Calu3 (cell line): ENCODE measurements at regions of chr19 and their contacts with region 1.

Region 1: GRCh38 chr19:8204961-8205360 is 4.2 kb upstream of the CERS4 start:
- DNase-seq: peak; percentile 38
- H3K4me3 Mint-ChIP-seq: no peak overlapping the region
- H3K27ac Mint-ChIP-seq: no peak overlapping the region
- H3K4me1 Mint-ChIP-seq: peaks cover 13% of the 10 kb centered on the region
- H3K27me3 Mint-ChIP-seq: peaks cover 26% of the 10 kb centered on the region
- CTCF ChIP-seq: no peak

Region 2: DNA sequence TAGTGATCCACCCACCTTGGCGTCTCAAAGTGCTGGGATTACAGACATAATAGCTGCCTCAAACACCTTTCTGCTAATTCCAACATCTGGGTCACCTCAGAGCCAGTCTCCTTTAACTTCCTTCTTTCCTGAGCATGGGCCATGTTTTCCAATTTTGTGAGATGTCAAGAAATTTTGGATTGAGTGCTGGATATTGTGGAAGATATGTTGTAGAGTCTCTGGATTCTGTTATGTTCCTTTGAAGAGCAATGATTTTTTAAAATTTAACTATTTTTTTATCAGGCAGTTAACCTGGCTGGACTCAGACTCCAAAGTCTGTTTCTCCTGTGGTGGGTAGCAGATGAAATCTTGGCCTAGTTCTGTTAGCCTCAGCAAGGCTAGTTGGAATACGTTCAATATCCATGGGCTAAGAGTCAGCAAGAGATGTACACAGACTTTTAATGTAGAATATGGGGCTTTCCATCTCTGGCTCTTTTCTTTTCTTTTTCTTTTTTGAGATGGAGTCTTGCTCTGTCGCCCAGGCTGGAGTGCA is 26.2 kb after region 1 on chr19:
- CTCF ChIA-PET with region 1: no interaction called
- intact Hi-C with region 1: no loop called
- DNase-seq: no peak
- H3K4me3 Mint-ChIP-seq: no peak overlapping the region
- H3K27ac Mint-ChIP-seq: no peak overlapping the region
- H3K4me1 Mint-ChIP-seq: no peaks in the 10 kb centered on the region
- H3K27me3 Mint-ChIP-seq: no peaks in the 10 kb centered on the region
- CTCF ChIP-seq: no peak

Region 3: GRCh38 chr19:9597027-9597426 is 1392.1 kb after region 1 on chr19:
- CTCF ChIA-PET with region 1: interaction called, 16 read pairs
- intact Hi-C with region 1: no loop called
- DNase-seq: peak; percentile 17
- H3K4me3 Mint-ChIP-seq: peak overlapping the region; percentile 36
- H3K27ac Mint-ChIP-seq: peak overlapping the region; percentile 97
- H3K4me1 Mint-ChIP-seq: peaks cover 8% of the 10 kb centered on the region
- H3K27me3 Mint-ChIP-seq: no peaks in the 10 kb centered on the region
- CTCF ChIP-seq: no peak